ENCODE measurements at regions of chr19 and their contacts with region 1.

Region 1: GRCh38 chr19:41563854-41564514 is 12.0 kb upstream of the CEACAM21 start:
- DNase-seq: no peak
- ATAC-seq: peak in 1 of 8 donors; percentile 38
- H3K4me3 ChIP-seq: peak overlapping the region in 7 of 10 donors; percentile 4 to 28 (median 11)
- H3K27ac ChIP-seq: no peak overlapping the region
- H3K4me1 ChIP-seq: peaks cover 3 to 32% (median 14%) of the 10 kb centered on the region in 9 donors
- H3K27me3 ChIP-seq: peaks cover 11 to 78% (median 57%) of the 10 kb centered on the region in 7 donors
- CTCF ChIP-seq: no peak

Region 2: DNA sequence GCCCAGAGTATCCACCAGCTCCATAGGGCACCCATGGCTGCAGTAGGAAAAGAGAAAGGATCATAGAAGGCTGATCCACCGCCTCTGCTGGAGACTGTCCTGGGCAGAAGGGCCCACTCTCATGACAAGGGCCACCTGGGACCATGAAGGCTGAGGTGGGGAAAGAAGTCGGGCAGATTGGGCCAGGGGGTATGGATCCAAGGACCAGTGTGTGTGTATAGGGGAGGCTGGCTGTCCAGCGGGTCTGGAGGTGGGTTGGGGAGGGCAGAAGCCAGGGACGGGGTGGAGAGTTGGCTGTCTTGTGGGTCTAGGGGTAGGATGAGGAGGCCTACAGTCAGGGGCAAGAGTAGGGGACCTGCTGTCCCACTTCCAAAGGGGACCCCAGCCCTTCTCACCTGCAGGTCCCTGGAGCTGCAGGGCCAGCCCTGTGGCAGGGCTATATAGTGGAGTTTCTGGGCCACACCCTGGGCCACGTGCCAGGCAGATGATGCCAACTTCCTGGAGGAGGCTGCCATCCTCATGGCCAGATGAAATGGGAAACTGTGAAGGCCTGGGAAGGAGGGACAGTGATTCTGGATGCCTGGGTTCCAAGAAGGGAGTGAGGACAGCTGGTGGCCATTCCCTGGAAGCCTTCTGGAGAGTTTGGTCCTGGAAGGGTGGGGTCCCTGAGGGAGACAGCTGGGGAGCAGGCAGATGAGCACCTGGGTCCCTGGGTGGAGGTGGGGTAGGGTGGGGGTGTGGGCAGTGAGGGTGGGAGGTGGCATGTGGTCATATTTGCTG is 1629.2 kb before region 1 on chr19 and contains the start of gene FCGBP:
- intact Hi-C with region 1: no loop called
- DNase-seq: no peak
- ATAC-seq: no peak
- H3K4me3 ChIP-seq: no peak within 1 kb of the TSS
- H3K27ac ChIP-seq: no peak within 1 kb of the TSS
- H3K4me1 ChIP-seq: peaks cover 0 to 29% (median 0%) of the 10 kb centered on the region in 9 donors
- H3K27me3 ChIP-seq: peaks cover 0 to 84% (median 9%) of the 10 kb centered on the region in 7 donors
- CTCF ChIP-seq: no peak
- total RNA-seq, gene FCGBP: 0.30 to 42.3 (median 1.9) TPM

Region 3: GRCh38 chr19:41327576-41328156 is 236.3 kb before region 1 on chr19:
- intact Hi-C with region 1: loop called in 1 of 10 experiments (anchors 10 kb)
- DNase-seq: peak; percentile 76 to 79
- ATAC-seq: peak; percentile 37 to 65 (median 55)
- H3K4me3 ChIP-seq: peak overlapping the region in 9 of 10 donors; percentile 20 to 49 (median 40)
- H3K27ac ChIP-seq: peak overlapping the region; percentile 67 to 96 (median 88)
- H3K4me1 ChIP-seq: peaks cover 36 to 87% (median 62%) of the 10 kb centered on the region in 9 donors
- H3K27me3 ChIP-seq: no peaks in the 10 kb centered on the region
- CTCF ChIP-seq: peak in 1 of 9 donors; percentile 13

Region 4: GRCh38 chr19:41457241-41457640 is 106.7 kb before region 1 on chr19:
- intact Hi-C with region 1: loop called in 2 of 10 experiments (anchors 5 to 10 kb)
- DNase-seq: no peak
- ATAC-seq: peak in 5 of 8 donors; percentile 29 to 73 (median 41)
- H3K4me3 ChIP-seq: peak overlapping the region in 1 of 10 donors; percentile 8
- H3K27ac ChIP-seq: peak overlapping the region in 9 of 10 donors; percentile 4 to 77 (median 67)
- H3K4me1 ChIP-seq: peaks cover 0 to 32% (median 23%) of the 10 kb centered on the region in 9 donors
- H3K27me3 ChIP-seq: peaks cover 0 to 35% (median 7%) of the 10 kb centered on the region in 7 donors
- CTCF ChIP-seq: no peak

Region 5: GRCh38 chr19:41541990-41542584 is 21.9 kb before region 1 on chr19:
- intact Hi-C with region 1: loop called in 3 of 10 experiments (anchors 2 kb)
- DNase-seq: peak; percentile 53 to 67
- ATAC-seq: no peak
- H3K4me3 ChIP-seq: no peak overlapping the region
- H3K27ac ChIP-seq: no peak overlapping the region
- H3K4me1 ChIP-seq: peaks cover 0 to 29% (median 8%) of the 10 kb centered on the region in 9 donors
- H3K27me3 ChIP-seq: peaks cover 0 to 32% (median 4%) of the 10 kb centered on the region in 7 donors
- CTCF ChIP-seq: peak; percentile 27 to 83 (median 68)

Region 6: GRCh38 chr19:41575998-41576397 is 12.0 kb after region 1 on chr19 and contains the start of gene CEACAM21:
- intact Hi-C with region 1: no loop called
- DNase-seq: peak; percentile 30 to 53
- ATAC-seq: peak; percentile 75 to 95 (median 88)
- H3K4me3 ChIP-seq: peak within 1 kb of the TSS in 2 of 10 donors; percentile 11 to 38
- H3K27ac ChIP-seq: peak within 1 kb of the TSS in 5 of 10 donors; percentile 19 to 88 (median 48)
- H3K4me1 ChIP-seq: peaks cover 0 to 18% (median 0%) of the 10 kb centered on the region in 9 donors
- H3K27me3 ChIP-seq: peaks cover 0 to 15% (median 5%) of the 10 kb centered on the region in 7 donors
- CTCF ChIP-seq: no peak
- total RNA-seq, gene CEACAM21: 0.26 to 3.3 (median 0.57) TPM in 9 of 10 donors, not detected in the other

Region 7: DNA sequence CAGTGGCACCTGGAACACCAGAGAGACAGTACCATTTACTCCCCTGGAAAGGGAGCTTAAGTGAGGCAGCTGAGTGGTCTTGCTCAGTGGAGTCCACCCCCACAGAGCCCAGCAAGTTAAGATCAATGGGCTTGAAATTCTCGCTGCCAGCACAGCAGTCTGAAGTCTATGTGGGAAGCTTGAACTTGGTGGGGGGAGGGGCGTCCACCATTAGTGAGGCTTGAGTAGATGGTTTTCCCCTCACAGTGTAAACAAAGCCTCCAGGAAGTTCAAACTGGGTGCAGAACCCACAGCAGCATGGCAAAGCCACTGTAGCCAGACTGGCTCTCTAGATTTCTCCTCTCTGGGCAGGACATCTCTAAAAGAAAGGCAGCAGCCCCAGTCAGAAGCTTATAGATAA is 93.2 kb after region 1 on chr19:
- intact Hi-C with region 1: no loop called
- DNase-seq: no peak
- ATAC-seq: no peak
- H3K4me3 ChIP-seq: no peak overlapping the region
- H3K27ac ChIP-seq: no peak overlapping the region
- H3K4me1 ChIP-seq: no peaks in the 10 kb centered on the region
- H3K27me3 ChIP-seq: peaks cover 0 to 53% (median 29%) of the 10 kb centered on the region in 7 donors
- CTCF ChIP-seq: no peak